RWPE1 (cell line): ENCODE measurements at regions of chr4 and their contacts with region 1.

Region 1: DNA sequence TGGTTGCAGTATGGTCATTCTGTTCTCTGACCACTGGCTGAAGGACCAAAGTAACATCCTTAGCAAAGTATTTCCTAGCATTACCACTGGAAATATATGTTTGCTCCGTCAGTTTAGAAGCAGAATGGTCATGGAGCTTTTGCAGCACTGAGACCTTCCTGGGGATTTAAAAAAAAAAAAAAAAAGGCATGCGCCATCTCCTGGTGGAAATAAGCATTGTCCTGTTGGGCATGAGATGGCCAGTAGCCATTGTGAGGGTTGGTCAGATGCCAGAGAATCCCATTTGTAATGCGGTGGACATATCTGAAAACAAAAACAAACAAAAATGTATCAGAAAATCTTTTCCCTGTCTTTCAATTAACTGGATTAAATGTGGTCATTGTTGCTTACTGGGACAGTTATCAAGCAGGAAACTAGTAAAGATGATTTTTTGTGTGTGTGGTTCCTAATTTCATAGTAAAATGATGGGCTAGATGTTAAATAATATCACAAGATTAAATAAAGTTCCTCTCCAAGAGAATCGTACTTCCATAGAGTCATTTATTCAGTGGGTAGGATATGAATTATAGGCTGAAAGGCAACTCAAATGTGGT is 139.6 kb downstream of the SOWAHB start:
- DNase-seq: peak; percentile 53
- H3K27ac ChIP-seq: no peak overlapping the region
- CTCF ChIP-seq: peak; percentile 78

Region 2: DNA sequence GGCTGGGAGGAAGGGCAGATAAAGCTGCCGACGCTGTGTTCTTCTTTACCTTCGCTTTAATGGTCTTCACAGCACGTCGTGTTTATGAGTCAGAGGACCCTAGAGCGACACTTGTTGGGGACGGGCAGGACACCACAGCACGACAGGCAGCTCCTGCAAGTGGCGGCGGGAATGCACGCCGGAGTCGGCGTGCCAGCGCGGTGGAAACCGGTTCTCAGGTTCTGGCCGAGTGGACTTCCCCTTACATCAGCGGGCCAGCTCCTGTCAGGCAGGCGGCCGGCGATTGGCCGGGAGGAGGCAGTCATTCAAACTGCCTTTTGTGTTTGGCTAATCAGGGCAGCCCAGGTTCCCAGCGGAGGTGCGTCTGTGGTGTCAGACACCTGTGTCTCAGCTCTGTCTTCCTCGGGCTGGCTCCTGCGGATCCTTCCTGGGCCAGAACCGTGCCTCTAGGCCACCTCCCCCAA is 172.5 kb before region 1 on chr4:
- CTCF ChIA-PET with region 1: no interaction called
- POLR2A ChIA-PET with region 1: no interaction called
- DNase-seq: peak; percentile 20
- H3K27ac ChIP-seq: no peak overlapping the region
- CTCF ChIP-seq: no peak; the same call in 1 of the 2 replicates

Region 3: DNA sequence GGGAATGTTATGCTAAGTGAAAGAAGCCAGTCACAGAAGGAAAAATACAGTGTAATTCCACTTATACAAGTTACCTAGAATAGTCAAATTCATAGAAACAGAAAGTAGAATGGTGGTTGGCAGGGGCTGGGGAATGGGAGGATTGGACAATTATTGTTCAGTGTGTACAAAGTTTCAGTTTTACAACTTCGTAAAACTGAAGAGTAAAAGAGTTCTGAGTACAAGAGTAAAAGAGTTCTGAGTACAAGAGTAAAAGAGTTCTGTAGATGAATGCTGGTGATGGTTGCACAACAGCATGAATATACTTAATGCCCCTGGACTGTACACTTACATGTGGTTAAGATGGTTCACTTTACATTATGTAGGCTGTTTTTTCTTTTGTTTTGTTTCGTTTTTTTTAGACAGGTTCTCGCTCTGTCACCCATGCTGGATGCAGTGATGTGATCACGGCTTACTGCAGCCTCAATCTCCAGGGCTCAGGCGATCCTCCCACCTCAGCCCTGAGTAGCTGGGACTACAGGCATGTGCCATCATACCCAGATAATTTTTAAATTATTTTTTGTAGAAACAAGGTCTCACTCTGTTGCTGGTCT is 91.3 kb before region 1 on chr4:
- CTCF ChIA-PET with region 1: no interaction called
- POLR2A ChIA-PET with region 1: interaction called, 12 read pairs
- DNase-seq: no peak
- H3K27ac ChIP-seq: no peak overlapping the region
- CTCF ChIP-seq: no peak